ENCODE measurements at regions of chr14 and their contacts with region 1.

Region 1: GRCh38 chr14:77097700-77098528 is at the start of gene CIPC:
- DNase-seq: peak; percentile 100
- H3K4me3 Mint-ChIP-seq: peak within 1 kb of the TSS; percentile 87
- H3K27ac Mint-ChIP-seq: peak within 1 kb of the TSS; percentile 93
- H3K4me1 Mint-ChIP-seq: peaks cover 36% of the 10 kb centered on the region
- H3K27me3 Mint-ChIP-seq: peaks cover 8% of the 10 kb centered on the region
- total RNA-seq, gene CIPC: 12.7 and 14.0 TPM in 2 replicates

Region 2: GRCh38 chr14:76151398-76152339 is 946.2 kb before region 1 on chr14 and contains the start of gene GPATCH2L:
- intact Hi-C with region 1: loop called (anchors 10 kb)
- DNase-seq: peak; percentile 99
- H3K4me3 Mint-ChIP-seq: peak within 1 kb of the TSS; percentile 88
- H3K27ac Mint-ChIP-seq: peak within 1 kb of the TSS; percentile 99
- H3K4me1 Mint-ChIP-seq: peaks cover 44% of the 10 kb centered on the region
- H3K27me3 Mint-ChIP-seq: peaks cover 5% of the 10 kb centered on the region
- total RNA-seq, gene GPATCH2L: 60.6 and 61.6 TPM in 2 replicates

Region 3: DNA sequence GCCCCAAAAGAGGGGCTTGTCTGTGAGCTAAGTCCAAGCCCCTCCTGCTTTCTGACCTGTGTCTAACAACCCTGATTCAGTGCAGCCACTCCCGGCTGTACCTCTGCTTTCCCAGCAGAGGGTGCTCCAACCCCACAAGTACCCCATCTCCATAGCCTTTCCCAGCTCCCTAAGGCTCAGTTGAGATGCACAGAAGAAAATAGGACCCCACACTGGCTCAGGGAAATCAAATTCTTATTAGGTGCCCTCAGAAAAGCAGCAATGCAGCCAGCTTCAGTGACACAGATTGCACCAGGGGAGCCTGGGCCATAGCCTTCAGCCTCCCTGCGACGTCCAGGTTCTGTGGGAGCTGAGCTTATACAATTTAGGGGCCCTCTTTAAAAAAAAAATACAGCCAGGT is 221.8 kb before region 1 on chr14:
- intact Hi-C with region 1: loop called (anchors 1 kb)
- DNase-seq: peak; percentile 82
- H3K4me3 Mint-ChIP-seq: no peak overlapping the region
- H3K27ac Mint-ChIP-seq: no peak overlapping the region
- H3K4me1 Mint-ChIP-seq: peaks cover 2% of the 10 kb centered on the region
- H3K27me3 Mint-ChIP-seq: peaks cover 3% of the 10 kb centered on the region

Region 4: GRCh38 chr14:77067632-77068514 is 30.0 kb before region 1 on chr14:
- intact Hi-C with region 1: loop called (anchors 1 kb)
- DNase-seq: peak; percentile 88
- H3K4me3 Mint-ChIP-seq: no peak overlapping the region
- H3K27ac Mint-ChIP-seq: no peak overlapping the region
- H3K4me1 Mint-ChIP-seq: peaks cover 3% of the 10 kb centered on the region
- H3K27me3 Mint-ChIP-seq: peaks cover 11% of the 10 kb centered on the region

Region 5: DNA sequence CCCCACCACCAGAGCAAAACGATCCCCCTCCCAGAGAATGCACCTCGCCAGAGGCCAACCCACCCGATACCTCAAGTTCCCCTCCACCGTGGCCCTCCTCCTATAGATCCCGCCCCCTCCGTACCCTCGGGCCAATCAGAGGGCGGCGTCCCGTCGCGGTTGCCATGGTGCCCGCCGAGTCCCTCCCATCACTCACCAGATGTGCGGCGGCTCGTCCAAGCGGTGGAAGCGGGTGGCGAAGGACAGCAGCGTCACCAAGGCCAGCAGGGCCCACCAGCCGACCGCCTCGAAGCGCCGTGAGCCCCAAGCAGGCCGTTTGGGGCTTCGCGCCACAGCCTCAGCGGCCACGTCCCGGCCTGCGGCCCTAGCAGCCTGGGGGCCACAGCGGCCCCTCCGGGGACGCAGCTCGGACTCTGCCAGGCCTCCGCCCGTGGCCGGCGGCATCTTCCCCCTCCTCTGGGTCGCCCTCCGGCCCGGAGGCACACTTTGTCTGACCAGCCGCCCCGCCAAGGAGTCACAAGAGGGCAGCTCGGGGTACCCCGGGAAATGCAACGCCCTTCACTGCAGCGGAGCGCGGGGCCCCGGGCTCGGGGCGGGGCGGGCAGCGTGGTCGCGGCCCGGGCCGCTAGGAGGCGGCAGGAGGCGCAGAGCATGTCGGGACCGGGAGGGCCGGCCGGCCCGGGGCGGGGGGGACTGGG is 222.5 kb after region 1 on chr14 and contains the start of gene POMT2:
- intact Hi-C with region 1: loop called (anchors 1 kb)
- DNase-seq: peak; percentile 98
- H3K4me3 Mint-ChIP-seq: peak within 1 kb of the TSS; percentile 96
- H3K27ac Mint-ChIP-seq: peak within 1 kb of the TSS; percentile 99
- H3K4me1 Mint-ChIP-seq: peaks cover 14% of the 10 kb centered on the region
- H3K27me3 Mint-ChIP-seq: no peaks in the 10 kb centered on the region
- total RNA-seq, gene POMT2: 23.5 and 24.3 TPM in 2 replicates

Region 6: DNA sequence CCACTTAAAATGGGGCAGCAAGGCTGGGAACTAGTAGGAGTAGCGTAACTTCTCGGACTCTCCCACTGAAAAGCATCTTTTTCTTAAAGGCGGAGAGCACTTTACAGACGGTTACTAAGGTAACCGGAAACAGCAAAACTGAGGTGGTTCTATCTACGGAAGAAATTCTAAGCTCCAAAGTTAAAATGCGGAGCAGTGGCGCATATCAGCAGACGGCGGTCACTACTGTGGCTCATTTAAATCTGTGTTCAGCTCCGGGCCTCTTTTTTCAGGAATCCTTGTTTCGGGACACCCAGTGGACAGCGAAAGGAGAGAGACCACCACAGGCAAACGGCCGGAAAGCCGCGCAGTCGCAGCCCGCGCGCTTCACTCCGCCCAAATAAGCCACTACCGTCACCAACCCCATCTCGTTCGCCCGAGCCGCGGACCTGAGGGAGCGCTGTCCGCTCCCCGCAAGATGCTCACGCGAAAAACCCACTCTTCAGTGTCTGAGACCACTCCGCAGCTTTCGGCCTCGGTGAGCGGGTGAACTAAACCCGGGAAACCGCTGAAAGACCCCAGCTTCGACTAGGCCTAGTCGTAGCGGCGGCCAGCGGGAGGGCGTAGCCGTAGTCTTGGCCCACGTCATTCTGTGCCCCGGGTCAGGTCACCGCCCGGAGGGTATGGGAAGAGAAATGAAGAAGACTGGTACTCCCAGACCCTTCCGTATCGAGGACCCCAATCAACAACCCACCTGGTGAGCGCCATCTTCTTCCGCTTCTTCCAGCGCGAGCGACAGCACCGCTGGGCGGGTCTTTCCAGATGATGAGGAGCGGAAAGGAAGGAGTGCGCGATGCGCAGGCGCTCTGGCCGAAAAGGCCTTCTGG is 662.7 kb after region 1 on chr14 and contains the start of gene SNW1:
- intact Hi-C with region 1: loop called (anchors 1 kb)
- DNase-seq: peak; percentile 97
- H3K4me3 Mint-ChIP-seq: peak within 1 kb of the TSS; percentile 94
- H3K27ac Mint-ChIP-seq: peak within 1 kb of the TSS; percentile 99
- H3K4me1 Mint-ChIP-seq: peaks cover 25% of the 10 kb centered on the region
- H3K27me3 Mint-ChIP-seq: peaks cover 6% of the 10 kb centered on the region
- total RNA-seq, gene SNW1: 121 TPM in 2 replicates

Measured in activated CD4-positive, alpha-beta T cell treated with anti-CD3 and anti-CD28 coated beads, Interleukin-2, amount 10 ng/mL, durations not matched to agents 24 days and 14 days (primary cell).